ENCODE measurements at regions of chr19 and their contacts with region 1.

Region 1: GRCh38 chr19:49590071-49590970 is 661 bp upstream of the PRR12 start:
- DNase-seq: peak; percentile 98
- ATAC-seq: peak; percentile 85
- H3K4me3 Mint-ChIP-seq: peak overlapping the region; percentile 87
- H3K27ac Mint-ChIP-seq: peak overlapping the region; percentile 89
- H3K4me1 Mint-ChIP-seq: peaks cover 30% of the 10 kb centered on the region
- H3K27me3 Mint-ChIP-seq: peaks cover 4% of the 10 kb centered on the region

Region 2: GRCh38 chr19:49443366-49444099 is 146.8 kb before region 1 on chr19:
- CTCF ChIA-PET with region 1: no interaction called
- DNase-seq: peak; percentile 96
- ATAC-seq: peak; percentile 85
- H3K4me3 Mint-ChIP-seq: peak overlapping the region; percentile 78
- H3K27ac Mint-ChIP-seq: peak overlapping the region; percentile 80
- H3K4me1 Mint-ChIP-seq: peaks cover 51% of the 10 kb centered on the region
- H3K27me3 Mint-ChIP-seq: peaks cover 36% of the 10 kb centered on the region

Region 3: GRCh38 chr19:49614096-49614833 is 23.9 kb after region 1 on chr19:
- CTCF ChIA-PET with region 1: no interaction called
- DNase-seq: no peak
- ATAC-seq: peak; percentile 83
- H3K4me3 Mint-ChIP-seq: no peak overlapping the region
- H3K27ac Mint-ChIP-seq: peak overlapping the region; percentile 76
- H3K4me1 Mint-ChIP-seq: peaks cover 16% of the 10 kb centered on the region
- H3K27me3 Mint-ChIP-seq: no peaks in the 10 kb centered on the region

Region 4: GRCh38 chr19:49640113-49640898 is 50.0 kb after region 1 on chr19 and contains the start of gene RRAS:
- CTCF ChIA-PET with region 1: interaction called, 10 read pairs
- DNase-seq: peak; percentile 100
- ATAC-seq: peak; percentile 75
- H3K4me3 Mint-ChIP-seq: peak within 1 kb of the TSS; percentile 93
- H3K27ac Mint-ChIP-seq: peak within 1 kb of the TSS; percentile 99
- H3K4me1 Mint-ChIP-seq: peaks cover 44% of the 10 kb centered on the region
- H3K27me3 Mint-ChIP-seq: peaks cover 6% of the 10 kb centered on the region
- total RNA-seq, gene RRAS: 6.6 to 9.6 TPM

Region 5: DNA sequence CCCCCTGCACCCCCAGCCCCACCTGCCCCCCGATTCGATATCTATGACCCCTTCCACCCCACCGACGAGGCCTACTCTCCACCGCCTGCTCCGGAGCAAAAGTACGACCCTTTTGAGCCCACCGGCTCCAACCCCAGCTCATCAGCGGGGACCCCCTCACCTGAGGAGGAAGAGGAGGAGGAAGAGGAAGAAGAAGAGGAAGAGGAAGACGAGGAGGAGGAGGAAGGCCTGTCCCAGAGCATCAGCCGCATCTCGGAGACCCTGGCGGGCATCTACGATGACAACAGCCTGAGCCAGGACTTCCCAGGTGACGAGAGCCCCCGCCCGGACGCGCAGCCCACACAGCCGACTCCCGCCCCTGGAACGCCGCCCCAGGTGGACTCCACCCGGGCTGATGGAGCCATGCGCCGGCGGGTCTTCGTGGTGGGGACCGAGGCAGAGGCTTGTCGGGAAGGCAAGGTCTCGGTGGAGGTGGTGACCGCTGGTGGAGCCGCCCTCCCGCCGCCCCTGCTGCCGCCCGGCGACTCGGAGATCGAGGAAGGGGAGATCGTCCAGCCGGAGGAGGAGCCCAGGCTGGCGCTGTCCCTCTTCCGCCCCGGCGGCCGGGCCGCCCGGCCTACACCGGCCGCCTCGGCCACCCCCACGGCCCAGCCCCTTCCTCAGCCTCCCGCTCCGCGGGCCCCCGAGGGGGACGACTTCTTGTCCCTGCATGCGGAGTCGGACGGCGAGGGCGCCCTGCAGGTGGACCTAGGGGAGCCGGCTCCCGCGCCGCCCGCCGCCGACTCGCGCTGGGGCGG is 60.9 kb after region 1 on chr19:
- CTCF ChIA-PET with region 1: no interaction called
- DNase-seq: no peak
- ATAC-seq: no peak
- H3K4me3 Mint-ChIP-seq: no peak overlapping the region
- H3K27ac Mint-ChIP-seq: no peak overlapping the region
- H3K4me1 Mint-ChIP-seq: peaks cover 2% of the 10 kb centered on the region
- H3K27me3 Mint-ChIP-seq: no peaks in the 10 kb centered on the region

Region 6: DNA sequence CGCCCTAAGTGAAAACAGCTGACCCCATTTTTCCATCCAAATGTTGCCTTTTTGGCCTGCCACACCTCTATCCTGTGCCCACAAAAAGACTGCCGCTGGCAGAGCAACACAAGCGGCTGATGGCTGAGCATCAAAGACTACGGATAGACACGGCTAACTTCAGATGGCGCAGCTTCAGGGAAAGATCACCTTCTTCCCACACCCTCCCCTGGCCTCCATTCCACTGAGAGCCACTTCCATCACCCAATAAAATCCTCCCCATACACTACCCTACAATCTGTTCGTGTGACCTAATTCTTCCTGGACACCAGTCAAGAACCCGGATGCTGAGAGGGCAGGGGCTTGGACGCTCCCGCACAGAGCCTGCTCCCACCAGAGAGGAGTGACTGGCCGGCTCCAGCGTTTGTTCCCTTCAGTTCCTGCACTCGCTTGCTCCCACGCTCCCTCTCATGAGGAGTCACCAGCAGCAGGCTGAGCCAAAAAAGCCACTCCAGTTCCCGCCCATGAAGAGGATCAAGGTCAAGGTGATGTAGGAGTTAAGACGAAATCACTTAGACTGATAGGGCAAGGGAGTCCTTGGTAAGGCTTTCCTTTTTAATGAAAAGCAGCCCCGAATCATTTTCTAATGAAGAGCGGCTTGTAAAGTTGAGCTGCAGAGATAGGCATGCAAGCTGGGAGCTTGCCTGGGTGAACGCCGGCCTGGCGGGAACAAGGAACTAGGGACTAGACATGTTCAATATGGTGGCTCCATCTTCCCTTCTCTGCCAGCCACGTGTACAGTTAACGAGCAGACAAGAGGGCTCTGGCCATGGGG is 137.1 kb after region 1 on chr19:
- CTCF ChIA-PET with region 1: no interaction called
- DNase-seq: no peak
- ATAC-seq: no peak
- H3K4me3 Mint-ChIP-seq: no peak overlapping the region
- H3K27ac Mint-ChIP-seq: no peak overlapping the region
- H3K4me1 Mint-ChIP-seq: peaks cover 3% of the 10 kb centered on the region
- H3K27me3 Mint-ChIP-seq: no peaks in the 10 kb centered on the region

Measured in activated CD8-positive, alpha-beta memory T cell treated with anti-CD3 and anti-CD28 coated beads, Interleukin-2, amount 10 ng/mL, durations not matched to agents 7 days and 5 days (primary cell).